Sigmoid colon (tissue), 7 donors: ENCODE measurements at regions of chr3 and their contacts with region 1.

Region 1: GRCh38 chr3:126267226-126267975 is 87.0 kb upstream of the ALDH1L1 start:
- DNase-seq: peak; percentile 92
- H3K4me3 ChIP-seq: peak overlapping the region; percentile 1 to 46 (median 37)
- H3K27ac ChIP-seq: peak overlapping the region; percentile 85 to 92 (median 89)
- H3K4me1 ChIP-seq: peaks cover 0 to 52% (median 43%) of the 10 kb centered on the region in 4 donors
- H3K27me3 ChIP-seq: no peaks in the 10 kb centered on the region
- CTCF ChIP-seq: peak in 1 of 4 experiments; percentile 24
- EP300 ChIP-seq: peak in 2 of 4 donors; percentile 21 to 59
- POLR2A ChIP-seq: peak; percentile 10 to 49

Region 2: GRCh38 chr3:125767641-125768040 is 499.8 kb before region 1 on chr3:
- intact Hi-C with region 1: no loop called
- DNase-seq: no peak
- H3K4me3 ChIP-seq: no peak overlapping the region
- H3K27ac ChIP-seq: no peak overlapping the region
- H3K4me1 ChIP-seq: peaks cover 0 to 11% (median 0%) of the 10 kb centered on the region in 4 donors
- H3K27me3 ChIP-seq: peaks cover 0 to 8% (median 0%) of the 10 kb centered on the region in 3 donors
- CTCF ChIP-seq: no peak
- EP300 ChIP-seq: no peak
- POLR2A ChIP-seq: no peak

Region 3: DNA sequence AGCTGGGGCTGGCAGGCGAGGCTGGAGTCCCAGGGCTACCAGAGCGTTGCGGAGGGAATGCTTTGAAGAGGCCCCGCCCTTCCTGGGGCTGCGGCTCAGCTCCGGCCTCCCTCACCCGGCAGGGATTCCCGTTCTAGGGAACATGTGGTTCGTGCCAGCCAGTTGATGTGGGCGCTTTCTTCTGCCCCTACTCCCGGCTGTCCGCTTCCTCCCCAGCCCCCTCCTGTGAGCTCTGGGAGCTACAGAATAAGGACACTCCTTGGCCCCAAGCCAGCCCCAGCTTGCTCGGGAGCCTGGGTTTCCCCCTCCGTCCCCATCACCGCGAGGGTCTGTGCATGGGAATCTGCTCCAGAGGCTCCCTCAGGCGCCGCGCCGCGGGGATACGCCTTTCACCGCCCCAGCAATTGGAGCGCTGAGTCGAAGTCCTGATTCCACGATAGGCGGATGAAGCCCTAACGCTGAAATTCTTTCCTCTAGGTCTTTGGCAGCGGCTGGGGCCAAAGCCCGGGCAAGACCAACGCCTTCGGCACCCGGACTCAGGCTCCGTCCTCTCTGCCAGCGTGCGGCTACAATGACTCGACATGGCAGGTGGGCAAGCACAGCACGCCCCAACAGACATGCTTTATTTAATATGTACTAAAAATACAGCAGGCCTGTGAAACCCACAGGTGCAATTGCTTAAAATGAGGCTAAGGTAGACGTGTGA is 20.3 kb after region 1 on chr3:
- intact Hi-C with region 1: loop called (anchors 2 kb)
- DNase-seq: peak; percentile 92
- H3K4me3 ChIP-seq: peak overlapping the region; percentile 32 to 54 (median 50)
- H3K27ac ChIP-seq: peak overlapping the region; percentile 87 to 88 (median 87)
- H3K4me1 ChIP-seq: peaks cover 0 to 23% (median 23%) of the 10 kb centered on the region in 4 donors
- H3K27me3 ChIP-seq: no peaks in the 10 kb centered on the region
- CTCF ChIP-seq: no peak
- EP300 ChIP-seq: peak in 1 of 4 donors; percentile 25
- POLR2A ChIP-seq: no peak